Dendritic cell treated with granulocyte-macrophage colony-stimulating factor and Interleukin-4, amounts not matched to agents 40 ng/mL and 50 ng/mL, for 4 days (primary cell): ENCODE measurements at regions of chr12 and their contacts with region 1.

Region 1: GRCh38 chr12:22334410-22335290 is at the start of gene ST8SIA1:
- H3K4me3 Mint-ChIP-seq: peak within 1 kb of the TSS; percentile 86
- H3K27ac Mint-ChIP-seq: peak within 1 kb of the TSS; percentile 63
- H3K4me1 Mint-ChIP-seq: peaks cover 46% of the 10 kb centered on the region
- H3K27me3 Mint-ChIP-seq: peaks cover 57% of the 10 kb centered on the region

Region 2: DNA sequence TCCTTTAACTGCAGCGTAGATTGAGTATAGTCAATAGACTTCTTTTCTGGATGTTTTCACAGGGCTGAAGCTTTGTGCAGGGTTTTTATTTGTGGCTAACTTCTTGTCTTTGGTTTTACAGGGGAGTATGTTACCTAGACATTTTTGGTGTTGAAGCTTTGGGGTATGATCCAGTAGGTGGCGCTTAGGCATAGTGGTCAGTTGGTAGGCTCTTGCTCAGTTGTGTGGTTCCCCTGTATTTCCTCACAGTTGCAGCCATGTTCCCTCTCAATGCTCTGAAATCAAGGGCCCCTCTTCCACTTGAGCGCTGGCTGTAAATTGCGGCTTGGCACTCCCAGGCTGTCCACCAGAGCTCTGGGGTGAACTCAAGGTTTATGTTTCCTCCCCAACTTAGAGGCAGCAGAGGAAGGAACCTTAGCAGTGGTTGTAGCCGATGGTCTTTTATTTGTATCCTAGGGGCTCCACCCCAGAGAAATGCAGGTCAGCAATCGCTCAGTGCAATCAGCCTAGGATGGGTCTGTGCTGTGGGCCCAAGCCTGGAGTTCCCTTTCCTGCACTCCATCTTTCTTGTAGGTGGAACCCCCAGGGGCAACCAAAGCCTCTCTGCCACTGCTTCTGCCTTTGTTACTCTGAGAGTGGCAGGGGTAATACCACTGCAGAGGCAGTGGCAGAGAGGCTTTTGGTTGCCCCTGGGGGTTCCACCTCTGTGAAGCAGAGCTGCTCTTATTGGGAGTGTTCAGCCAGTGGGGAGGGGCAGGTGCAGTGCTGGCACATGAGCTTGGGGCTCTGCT is 233.5 kb before region 1 on chr12:
- intact Hi-C with region 1: loop called (anchors 2 kb)
- H3K4me3 Mint-ChIP-seq: no peak overlapping the region
- H3K27ac Mint-ChIP-seq: no peak overlapping the region
- H3K4me1 Mint-ChIP-seq: peaks cover 16% of the 10 kb centered on the region
- H3K27me3 Mint-ChIP-seq: no peaks in the 10 kb centered on the region

Region 3: DNA sequence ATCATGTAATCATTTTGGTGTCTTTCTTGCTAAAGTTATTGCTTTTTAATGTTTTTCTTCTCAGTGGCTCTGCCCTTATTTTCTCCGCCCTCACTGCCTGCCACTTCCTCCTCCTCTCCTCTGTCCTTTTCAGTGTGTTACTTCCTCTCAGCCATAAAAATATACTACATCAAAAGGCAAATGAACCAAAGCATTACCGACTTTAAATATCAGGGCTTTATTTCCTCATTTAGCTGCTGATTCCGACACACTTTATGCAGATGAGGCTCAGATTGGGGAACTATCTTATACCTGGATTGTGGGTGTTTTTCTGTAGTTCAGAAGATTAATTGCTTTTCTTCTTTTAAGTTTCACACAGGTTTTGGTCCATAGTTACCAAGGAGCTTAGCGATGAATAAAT is 170.5 kb before region 1 on chr12:
- intact Hi-C with region 1: no loop called
- H3K4me3 Mint-ChIP-seq: no peak overlapping the region
- H3K27ac Mint-ChIP-seq: no peak overlapping the region
- H3K4me1 Mint-ChIP-seq: peaks cover 11% of the 10 kb centered on the region
- H3K27me3 Mint-ChIP-seq: no peaks in the 10 kb centered on the region

Region 4: DNA sequence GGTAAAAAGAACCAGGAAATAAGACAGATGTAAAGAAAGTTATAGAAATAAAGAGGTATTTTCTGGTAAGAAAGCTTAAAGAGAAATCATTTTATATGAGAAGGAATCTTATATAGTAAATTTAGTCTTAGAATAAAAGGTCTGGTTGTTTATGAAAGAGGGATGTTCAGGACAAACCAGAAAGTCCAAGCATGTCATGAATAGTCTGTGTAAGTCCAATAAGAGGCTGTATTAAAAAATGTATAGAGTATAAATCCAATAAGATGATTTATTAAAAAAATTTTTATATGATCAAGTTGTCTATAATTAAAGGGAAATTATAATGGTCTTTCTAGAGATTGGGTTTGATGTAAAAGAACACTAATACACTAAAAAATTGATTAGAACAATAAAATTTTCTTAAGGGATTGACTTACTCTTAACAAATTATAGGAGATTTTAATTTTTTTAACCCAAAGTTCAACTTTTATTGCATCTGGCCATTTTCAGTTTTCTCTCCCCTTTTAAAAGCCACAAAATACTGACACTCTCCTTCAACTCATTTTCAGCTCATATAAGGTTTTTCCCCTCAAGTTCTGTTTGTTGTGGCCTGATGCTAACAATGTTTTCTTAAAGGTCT is 35.2 kb before region 1 on chr12:
- intact Hi-C with region 1: no loop called
- H3K4me3 Mint-ChIP-seq: no peak overlapping the region
- H3K27ac Mint-ChIP-seq: no peak overlapping the region
- H3K4me1 Mint-ChIP-seq: no peaks in the 10 kb centered on the region
- H3K27me3 Mint-ChIP-seq: peaks cover 3% of the 10 kb centered on the region